ENCODE measurements at regions of chr4 and their contacts with region 1.

Region 1: GRCh38 chr4:114077610-114078009 is 98.2 kb upstream of the ARSJ start:
- DNase-seq: no peak
- ATAC-seq: no peak

Region 2: DNA sequence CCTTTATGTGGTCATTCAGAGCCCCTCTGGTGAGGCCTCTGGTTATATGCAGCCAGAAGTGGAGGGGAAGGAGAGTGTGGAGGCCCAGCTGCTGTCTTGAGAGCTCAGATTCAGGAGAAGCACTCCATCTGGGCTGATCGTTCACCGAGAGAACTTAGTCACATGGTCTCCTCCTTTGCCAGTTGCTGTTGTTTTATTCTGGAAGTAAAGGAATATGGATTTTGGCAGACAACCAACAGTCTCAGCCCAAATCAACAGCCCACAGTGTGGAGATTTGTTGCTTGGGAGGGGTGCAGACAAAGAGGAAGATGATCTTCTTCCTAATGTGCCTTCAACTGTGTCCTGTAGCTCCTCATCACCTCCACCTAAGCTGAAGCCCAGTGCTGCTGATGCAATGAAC is 672.8 kb before region 1 on chr4:
- intact Hi-C with region 1: loop called in 1 of 2 experiments (anchors 10 kb)
- DNase-seq: no peak
- ATAC-seq: peak; percentile 71 to 81

Region 3: DNA sequence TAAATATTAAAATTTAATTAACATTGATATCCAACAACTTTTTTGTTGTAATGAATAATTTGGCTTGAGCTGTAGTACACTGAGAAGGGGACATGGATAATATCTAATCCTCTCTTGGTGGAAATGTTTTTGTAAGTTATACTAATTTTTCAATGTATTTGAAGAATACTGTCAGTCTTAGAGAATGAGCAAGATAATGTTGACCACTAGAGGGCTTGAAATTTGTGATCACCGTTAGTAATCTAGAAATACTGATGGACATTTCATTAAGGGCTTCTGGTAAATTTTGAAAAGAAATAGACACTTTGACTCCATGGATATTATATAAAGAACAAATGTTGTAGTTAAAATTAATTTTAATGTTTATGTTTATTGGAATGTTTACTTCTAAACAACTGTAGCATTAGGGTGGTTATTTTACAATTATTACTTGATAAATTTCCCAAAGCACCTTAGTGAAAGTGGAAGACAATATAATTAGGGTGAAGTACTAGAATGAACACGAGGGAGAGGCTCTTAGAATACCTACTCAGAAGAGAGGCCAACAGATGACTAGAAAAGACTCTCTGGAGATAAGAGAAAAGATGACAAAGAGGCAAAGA is 296.1 kb before region 1 on chr4:
- intact Hi-C with region 1: loop called in 1 of 2 experiments (anchors 10 kb)
- DNase-seq: no peak
- ATAC-seq: peak in 1 of 2 donors; percentile 57

Region 4: DNA sequence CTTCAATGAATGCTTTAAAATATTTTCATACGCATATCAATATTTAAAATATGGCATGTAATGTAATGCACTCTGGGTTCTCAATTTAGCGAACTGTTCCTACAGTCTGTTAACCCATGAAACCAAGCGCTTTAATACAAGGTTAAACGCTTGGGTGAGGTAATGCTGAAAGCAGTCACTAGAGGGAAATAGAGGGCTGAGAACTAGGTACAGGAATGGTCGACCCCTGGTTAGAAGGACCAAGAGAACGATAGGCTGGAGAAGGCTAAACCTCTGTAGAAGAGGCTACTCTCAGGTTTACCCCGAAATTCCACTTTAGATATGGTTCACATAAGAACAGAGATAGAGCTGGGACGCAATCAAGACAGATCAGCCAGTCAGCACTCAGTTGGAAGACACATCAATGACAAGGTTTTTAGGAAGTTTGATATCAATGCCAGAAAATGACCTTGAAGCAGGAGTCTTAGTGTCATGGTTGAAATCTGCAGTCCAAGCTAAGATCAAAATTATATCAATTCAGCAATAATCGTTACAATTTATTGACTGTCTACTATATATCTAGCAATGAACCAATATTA is 125.1 kb before region 1 on chr4:
- intact Hi-C with region 1: loop called in 1 of 2 experiments (anchors 10 kb)
- DNase-seq: no peak
- ATAC-seq: peak; percentile 27 to 85

Measured in left cardiac atrium (tissue), 4 donors.